ENCODE measurements at regions of chr14 and their contacts with region 1.

Region 1: DNA sequence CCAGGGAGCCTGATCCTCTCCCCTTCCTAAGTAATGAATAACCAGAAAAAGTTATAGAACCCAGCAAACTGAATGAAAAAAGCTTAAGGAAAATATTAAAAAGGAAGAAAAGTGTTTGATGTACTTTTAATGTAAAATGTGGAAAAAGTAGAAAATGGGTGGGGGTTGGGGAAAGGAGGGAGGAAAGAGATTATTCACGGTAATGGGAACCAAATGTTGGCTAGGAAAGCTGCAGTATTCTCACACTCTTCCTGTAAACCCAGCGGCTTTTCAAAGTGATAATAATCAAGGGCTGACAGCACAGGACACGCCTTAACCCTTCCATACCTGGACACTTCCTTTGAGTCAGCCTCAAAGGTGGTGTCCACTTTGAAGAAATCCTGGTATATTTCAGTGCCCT is 139.2 kb downstream of the TGFB3 start:
- DNase-seq: no peak

Region 2: GRCh38 chr14:75340921-75341320 is 501.6 kb before region 1 on chr14:
- intact Hi-C with region 1: loop called in 1 of 2 experiments (anchors 10 kb)
- DNase-seq: peak; percentile 95

Region 3: GRCh38 chr14:76050797-76051392 is 208.3 kb after region 1 on chr14:
- intact Hi-C with region 1: no loop called
- DNase-seq: no peak

Measured in posterior vena cava (tissue), 2 donors.